Psoas muscle (tissue), 8 donors: ENCODE measurements at regions of chr16 and their contacts with region 1.

Region 1: GRCh38 chr16:19886073-19886941 is 1.7 kb upstream of the GPRC5B start:
- DNase-seq: peak; percentile 74 to 85
- ATAC-seq: peak; percentile 60 to 66 (median 63)
- H3K4me3 ChIP-seq: peak overlapping the region; percentile 92
- H3K27ac ChIP-seq: no peak overlapping the region
- H3K4me1 ChIP-seq: peaks cover 17% of the 10 kb centered on the region
- H3K27me3 ChIP-seq: no peaks in the 10 kb centered on the region
- CTCF ChIP-seq: peak; percentile 100

Region 2: DNA sequence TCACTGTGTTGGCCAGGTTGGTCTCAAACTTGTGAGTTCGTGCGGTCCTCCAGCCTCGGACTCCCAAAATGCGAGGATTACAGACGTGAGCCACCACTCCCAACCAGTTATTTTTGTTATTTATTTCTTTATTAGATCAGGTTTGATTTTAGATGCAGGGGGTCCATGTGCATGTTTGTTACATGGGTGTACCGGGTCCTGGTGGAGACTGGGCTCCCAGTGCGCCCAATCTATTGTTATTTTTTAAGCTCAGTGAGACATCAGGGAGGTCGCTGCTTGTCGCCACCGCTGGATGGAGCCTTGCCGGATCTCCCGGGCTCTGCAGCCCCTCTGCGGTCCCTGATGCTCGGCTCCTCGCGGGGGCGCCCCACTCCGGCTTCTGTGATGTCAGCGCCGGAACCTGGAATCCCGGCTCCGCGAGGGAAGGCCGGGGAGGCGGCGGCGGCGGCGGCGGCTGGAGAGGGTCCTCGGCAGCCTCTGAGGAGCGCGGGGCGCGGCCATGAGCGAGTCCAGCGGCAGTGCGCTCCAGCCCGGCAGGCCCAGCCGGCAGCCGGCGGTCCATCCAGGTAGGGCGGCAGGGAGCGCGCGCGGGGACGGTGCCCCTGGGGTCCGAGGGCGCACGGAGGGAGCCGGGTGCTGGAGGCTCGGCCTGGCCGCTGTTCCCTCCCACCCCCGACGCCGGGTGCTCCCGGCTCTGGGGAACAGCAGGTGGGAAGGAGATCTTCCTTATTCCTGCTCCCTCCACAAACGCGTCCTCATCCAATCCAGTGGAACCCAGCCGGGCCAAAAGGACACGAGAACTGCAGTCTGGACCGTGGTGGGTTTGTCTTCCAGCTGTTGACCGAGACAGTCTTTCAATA is 902.5 kb before region 1 on chr16 and contains the start of gene TMC7:
- intact Hi-C with region 1: loop called in 1 of 2 experiments (anchors 10 kb)
- DNase-seq: peak; percentile 71 to 81
- ATAC-seq: peak; percentile 93 to 97 (median 96)
- H3K4me3 ChIP-seq: peak within 1 kb of the TSS; percentile 67
- H3K27ac ChIP-seq: peak within 1 kb of the TSS; percentile 61
- H3K4me1 ChIP-seq: no peaks in the 10 kb centered on the region
- H3K27me3 ChIP-seq: no peaks in the 10 kb centered on the region
- CTCF ChIP-seq: peak; percentile 68
- total RNA-seq, gene TMC7: 0.32 to 1.8 (median 0.85) TPM

Region 3: GRCh38 chr16:19497176-19497575 is 389.1 kb before region 1 on chr16:
- intact Hi-C with region 1: no loop called
- DNase-seq: no peak
- ATAC-seq: no peak
- H3K4me3 ChIP-seq: no peak overlapping the region
- H3K27ac ChIP-seq: no peak overlapping the region
- H3K4me1 ChIP-seq: no peaks in the 10 kb centered on the region
- H3K27me3 ChIP-seq: no peaks in the 10 kb centered on the region
- CTCF ChIP-seq: no peak

Region 4: GRCh38 chr16:19583665-19584300 is 302.5 kb before region 1 on chr16:
- intact Hi-C with region 1: loop called in 1 of 2 experiments (anchors 5 kb)
- DNase-seq: no peak
- ATAC-seq: peak in 3 of 4 donors; percentile 54 to 74 (median 70)
- H3K4me3 ChIP-seq: no peak overlapping the region
- H3K27ac ChIP-seq: no peak overlapping the region
- H3K4me1 ChIP-seq: no peaks in the 10 kb centered on the region
- H3K27me3 ChIP-seq: no peaks in the 10 kb centered on the region
- CTCF ChIP-seq: peak; percentile 68

Region 5: GRCh38 chr16:19717771-19718602 is 168.3 kb before region 1 on chr16 and contains the starts of genes IQCK and KNOP1:
- intact Hi-C with region 1: loop called in 1 of 2 experiments (anchors 5 kb)
- DNase-seq: peak; percentile 93 to 96
- ATAC-seq: peak; percentile 96 to 98 (median 98)
- H3K4me3 ChIP-seq: peak within 1 kb of the TSS; percentile 87
- H3K27ac ChIP-seq: peak within 1 kb of the TSS; percentile 85
- H3K4me1 ChIP-seq: peaks cover 12% of the 10 kb centered on the region
- H3K27me3 ChIP-seq: no peaks in the 10 kb centered on the region
- CTCF ChIP-seq: no peak
- total RNA-seq, gene IQCK: 4.3 to 9.9 (median 7.3) TPM
- total RNA-seq, gene KNOP1: 5.9 to 9.7 (median 8.4) TPM

Region 6: GRCh38 chr16:19831678-19832077 is 54.6 kb before region 1 on chr16:
- intact Hi-C with region 1: loop called in 1 of 2 experiments (anchors 5 kb)
- DNase-seq: no peak
- ATAC-seq: peak; percentile 92 to 96 (median 94)
- H3K4me3 ChIP-seq: peak overlapping the region; percentile 48
- H3K27ac ChIP-seq: peak overlapping the region; percentile 89
- H3K4me1 ChIP-seq: peaks cover 39% of the 10 kb centered on the region
- H3K27me3 ChIP-seq: no peaks in the 10 kb centered on the region
- CTCF ChIP-seq: no peak

Region 7: DNA sequence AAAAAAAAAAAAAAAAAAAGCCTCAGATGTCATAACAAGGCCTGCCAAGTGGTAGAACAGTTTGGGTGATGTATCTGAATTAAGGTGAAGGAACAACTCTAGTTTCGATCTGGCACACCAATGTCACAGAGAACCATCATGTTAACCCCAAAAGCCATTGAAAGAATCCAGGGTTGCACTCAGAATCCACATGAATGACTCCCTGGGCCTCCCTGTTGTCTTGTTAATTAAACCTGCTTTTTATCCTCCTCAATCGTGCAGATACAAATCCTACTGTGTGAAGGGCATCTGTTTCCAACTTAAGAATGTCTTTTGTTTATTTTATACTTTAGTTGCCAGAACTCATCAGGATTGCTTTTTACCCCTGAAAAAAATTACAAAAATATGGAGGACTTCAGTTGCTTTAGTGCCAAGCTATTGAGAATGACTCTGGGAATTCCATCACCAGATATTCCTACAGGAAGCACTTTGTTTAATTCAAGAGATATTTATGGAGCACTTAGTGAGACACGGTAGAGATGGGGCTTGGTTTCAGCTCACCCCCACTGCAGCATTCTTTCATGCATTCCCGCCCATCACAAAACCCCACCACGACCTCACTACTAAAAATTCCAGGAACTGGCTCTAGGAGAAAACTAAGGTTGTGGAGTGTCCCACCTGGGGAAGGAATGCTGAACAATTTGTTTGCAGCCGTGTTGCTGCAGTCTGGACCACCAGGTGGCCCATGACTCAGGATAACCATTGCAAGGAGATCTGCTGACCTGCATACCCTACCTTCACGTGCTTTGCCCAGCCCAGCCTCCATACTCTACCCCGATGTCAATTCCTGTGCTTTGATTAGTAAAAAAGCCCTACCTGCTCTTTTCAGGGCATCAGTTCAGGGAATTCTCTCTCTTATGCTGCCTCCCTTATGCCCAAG is 62.1 kb after region 1 on chr16:
- intact Hi-C with region 1: no loop called
- DNase-seq: no peak
- ATAC-seq: no peak
- H3K4me3 ChIP-seq: no peak overlapping the region
- H3K27ac ChIP-seq: no peak overlapping the region
- H3K4me1 ChIP-seq: no peaks in the 10 kb centered on the region
- H3K27me3 ChIP-seq: peaks cover 0 to 15% (median 3%) of the 10 kb centered on the region in 3 donors
- CTCF ChIP-seq: no peak